ENCODE measurements at regions of chr5 and their contacts with region 1.

Region 1: GRCh38 chr5:18314192-18314778 is 680.0 kb downstream of the TAF11L14 start:
- DNase-seq: no peak
- ATAC-seq: no peak

Region 2: DNA sequence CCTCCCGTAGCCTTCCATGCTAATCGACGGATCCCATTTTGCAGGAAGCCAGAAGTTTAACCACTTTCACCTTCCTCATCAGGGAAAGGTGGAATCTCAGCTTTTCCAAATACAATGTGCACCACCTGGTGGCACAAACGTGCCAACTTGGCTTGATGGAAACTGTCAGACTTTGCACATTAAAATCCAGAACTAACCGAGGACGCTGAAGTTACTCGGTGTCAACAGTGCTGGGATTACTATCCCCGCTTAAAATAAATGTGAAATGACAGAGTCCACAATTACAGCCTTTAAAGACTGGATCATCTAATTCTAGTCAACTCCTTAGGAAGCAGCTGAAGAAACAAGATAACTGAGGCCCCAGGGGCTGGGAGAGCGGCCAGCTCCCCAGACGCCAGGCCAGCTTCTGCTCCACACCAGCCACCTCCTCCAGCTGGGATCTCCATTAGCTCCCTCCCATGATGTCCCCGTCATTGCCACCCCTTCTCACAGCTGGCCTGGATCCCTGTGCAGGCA is 1647.3 kb before region 1 on chr5:
- intact Hi-C with region 1: no loop called
- DNase-seq: peak; percentile 73
- ATAC-seq: peak; percentile 74

Region 3: DNA sequence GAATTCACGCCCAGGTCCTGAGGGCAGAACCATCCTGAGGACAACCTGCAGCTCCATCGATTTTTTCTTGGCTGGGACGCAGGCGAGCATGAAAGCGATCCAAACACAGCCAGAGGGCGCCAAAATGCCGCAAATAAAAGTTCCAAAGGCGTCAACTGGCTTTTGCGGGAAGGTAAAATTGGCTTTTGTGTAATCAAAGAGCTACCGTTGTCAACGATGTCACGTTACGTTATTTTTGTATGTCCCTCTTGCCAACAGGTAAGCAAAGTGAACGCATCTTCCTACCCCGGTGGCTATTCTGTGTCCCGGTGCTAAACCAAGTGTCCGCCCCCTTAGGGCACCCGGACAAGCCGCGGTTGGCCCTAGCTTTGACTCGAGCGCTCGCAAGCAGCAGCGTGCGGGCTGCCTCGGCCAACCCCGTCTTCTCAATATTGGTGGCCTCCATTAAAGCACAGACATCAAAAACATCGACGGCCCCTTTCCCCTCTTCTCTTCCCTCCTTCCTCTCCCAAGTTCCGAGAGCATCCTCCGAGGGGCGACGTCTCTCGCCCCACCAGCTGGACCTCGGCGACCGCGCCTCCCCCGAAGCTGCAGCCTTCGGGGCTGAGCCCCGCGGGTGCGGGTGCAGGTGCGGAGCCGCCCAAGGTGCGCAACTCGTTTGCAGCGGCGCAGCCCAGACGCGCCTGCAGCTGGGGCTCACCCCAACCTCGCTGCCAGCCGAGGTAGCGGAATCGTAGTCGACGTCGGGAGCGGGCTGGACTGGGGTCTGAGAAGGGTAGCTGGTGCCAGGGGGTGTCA is 1097.9 kb before region 1 on chr5:
- intact Hi-C with region 1: loop called (anchors 10 kb)
- DNase-seq: peak; percentile 78
- ATAC-seq: peak; percentile 75

Region 4: GRCh38 chr5:18526792-18527405 is 212.6 kb after region 1 on chr5:
- intact Hi-C with region 1: no loop called
- DNase-seq: no peak
- ATAC-seq: no peak